CD4-positive, alpha-beta memory T cell (primary cell): ENCODE measurements at regions of chr12 and their contacts with region 1.

Region 1: GRCh38 chr12:62221107-62221506 is 39.1 kb upstream of the USP15 start:
- DNase-seq: no peak
- H3K4me3 ChIP-seq: no peak overlapping the region
- H3K4me3 Mint-ChIP-seq: no peak overlapping the region
- H3K27ac ChIP-seq: no peak overlapping the region
- H3K27ac Mint-ChIP-seq: no peak overlapping the region
- H3K4me1 ChIP-seq: peaks cover 1% of the 10 kb centered on the region
- H3K4me1 Mint-ChIP-seq: peaks cover 0 to 5% (median 2%) of the 10 kb centered on the region in 4 donors
- H3K27me3 ChIP-seq: no peaks in the 10 kb centered on the region
- H3K27me3 Mint-ChIP-seq: no peaks in the 10 kb centered on the region

Region 2: GRCh38 chr12:61987173-61987572 is 233.9 kb before region 1 on chr12:
- CTCF ChIA-PET with region 1: no interaction called
- POLR2A ChIA-PET with region 1: no interaction called
- intact Hi-C with region 1: no loop called
- DNase-seq: no peak
- H3K4me3 ChIP-seq: no peak overlapping the region
- H3K4me3 Mint-ChIP-seq: no peak overlapping the region
- H3K27ac ChIP-seq: no peak overlapping the region
- H3K27ac Mint-ChIP-seq: no peak overlapping the region
- H3K4me1 ChIP-seq: no peaks in the 10 kb centered on the region
- H3K4me1 Mint-ChIP-seq: no peaks in the 10 kb centered on the region
- H3K27me3 ChIP-seq: no peaks in the 10 kb centered on the region
- H3K27me3 Mint-ChIP-seq: no peaks in the 10 kb centered on the region

Region 3: DNA sequence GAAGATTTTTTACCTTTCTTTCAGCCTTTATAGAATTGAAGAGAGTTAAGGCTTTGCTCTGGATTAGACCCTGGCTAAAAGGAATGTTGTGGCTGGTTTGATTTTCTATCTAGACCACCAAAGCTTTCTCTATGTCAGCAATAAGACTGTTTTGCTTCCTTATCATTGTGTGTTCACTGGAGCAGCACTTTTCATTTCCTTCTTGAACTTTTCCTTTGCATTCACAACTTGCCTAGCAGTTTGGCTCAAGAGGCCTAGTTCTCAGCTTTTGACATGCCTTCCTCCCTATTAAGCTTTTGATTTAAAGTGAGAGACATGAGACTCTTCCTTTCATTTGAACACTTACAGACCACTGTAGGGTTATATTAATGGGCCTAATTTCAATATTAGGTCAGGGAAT is 25.0 kb before region 1 on chr12:
- CTCF ChIA-PET with region 1: no interaction called
- POLR2A ChIA-PET with region 1: no interaction called
- intact Hi-C with region 1: no loop called
- DNase-seq: no peak
- H3K4me3 ChIP-seq: no peak overlapping the region
- H3K4me3 Mint-ChIP-seq: no peak overlapping the region
- H3K27ac ChIP-seq: no peak overlapping the region
- H3K27ac Mint-ChIP-seq: no peak overlapping the region
- H3K4me1 ChIP-seq: peaks cover 15% of the 10 kb centered on the region
- H3K4me1 Mint-ChIP-seq: peaks cover 9 to 17% (median 14%) of the 10 kb centered on the region in 4 donors
- H3K27me3 ChIP-seq: peaks cover 4% of the 10 kb centered on the region
- H3K27me3 Mint-ChIP-seq: peaks cover 10 to 15% of the 10 kb centered on the region in 2 donors

Region 4: DNA sequence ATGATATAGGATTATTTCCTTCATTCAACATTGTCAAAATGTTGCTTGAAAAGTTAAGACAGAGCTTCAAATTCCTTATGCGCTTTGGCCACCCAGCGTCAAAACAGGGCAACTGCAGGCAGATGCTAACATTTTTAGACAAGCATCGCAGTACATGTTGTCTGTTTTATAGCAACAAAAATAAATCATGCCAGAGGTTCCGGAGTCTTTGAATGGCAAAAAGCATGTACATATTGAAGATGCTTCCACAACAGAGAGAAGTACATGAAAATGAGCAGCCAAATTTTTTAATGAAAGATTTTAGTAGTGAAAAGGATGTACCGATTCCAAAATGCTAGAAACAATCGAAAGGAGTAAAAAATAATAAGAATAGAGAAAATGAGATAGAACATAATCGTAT is 10.7 kb before region 1 on chr12:
- CTCF ChIA-PET with region 1: interaction called, 13 read pairs
- POLR2A ChIA-PET with region 1: no interaction called
- intact Hi-C with region 1: no loop called
- DNase-seq: peak in 4 of 5 donors; percentile 19 to 34 (median 29)
- H3K4me3 ChIP-seq: no peak overlapping the region
- H3K4me3 Mint-ChIP-seq: no peak overlapping the region
- H3K27ac ChIP-seq: no peak overlapping the region
- H3K27ac Mint-ChIP-seq: peak overlapping the region in 1 of 7 donors; percentile 33
- H3K4me1 ChIP-seq: peaks cover 11% of the 10 kb centered on the region
- H3K4me1 Mint-ChIP-seq: peaks cover 0 to 18% (median 6%) of the 10 kb centered on the region in 4 donors
- H3K27me3 ChIP-seq: no peaks in the 10 kb centered on the region
- H3K27me3 Mint-ChIP-seq: peaks cover 9 to 10% of the 10 kb centered on the region in 2 donors